GM13977 (cell line): ENCODE measurements at regions of chr11 and their contacts with region 1.

Region 1: DNA sequence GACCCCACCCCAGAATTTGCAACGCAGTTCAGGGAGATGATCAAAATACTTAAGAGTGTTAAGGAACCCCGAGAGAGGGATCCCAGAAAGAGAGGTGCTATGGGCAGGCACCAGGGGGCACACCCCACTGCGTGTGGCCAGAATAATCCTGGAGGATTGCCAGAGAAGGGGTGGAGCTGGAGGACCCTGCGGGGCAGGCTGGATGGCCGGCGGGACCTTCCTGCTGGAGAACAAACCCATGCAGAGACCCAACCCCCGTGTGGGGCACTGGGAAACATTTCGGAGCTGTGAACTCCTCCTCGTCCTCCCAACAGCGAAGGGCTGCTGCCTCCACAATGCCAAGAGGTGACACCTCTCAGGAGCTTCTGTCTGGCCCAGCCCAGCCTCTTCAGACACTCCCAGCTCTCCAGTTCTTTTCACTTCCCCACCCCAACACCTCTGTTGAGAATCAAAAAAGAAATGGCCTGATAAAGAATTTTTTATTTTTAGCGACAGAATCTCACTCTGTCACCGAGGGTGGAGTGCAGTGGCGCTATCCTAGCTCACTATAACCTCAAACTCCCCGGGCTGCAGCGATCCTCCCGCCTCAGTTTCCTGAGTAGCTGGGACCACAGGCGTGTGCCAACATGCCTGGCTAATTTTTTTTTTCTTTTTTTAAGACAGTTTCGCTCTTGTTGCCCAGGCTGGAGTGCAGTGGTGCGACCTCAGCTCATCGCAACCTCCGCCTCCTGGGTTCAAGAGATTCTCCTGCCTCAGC is 25.6 kb downstream of the RHOD start:
- DNase-seq: no peak
- CTCF ChIP-seq: peak; percentile 34

Region 2: DNA sequence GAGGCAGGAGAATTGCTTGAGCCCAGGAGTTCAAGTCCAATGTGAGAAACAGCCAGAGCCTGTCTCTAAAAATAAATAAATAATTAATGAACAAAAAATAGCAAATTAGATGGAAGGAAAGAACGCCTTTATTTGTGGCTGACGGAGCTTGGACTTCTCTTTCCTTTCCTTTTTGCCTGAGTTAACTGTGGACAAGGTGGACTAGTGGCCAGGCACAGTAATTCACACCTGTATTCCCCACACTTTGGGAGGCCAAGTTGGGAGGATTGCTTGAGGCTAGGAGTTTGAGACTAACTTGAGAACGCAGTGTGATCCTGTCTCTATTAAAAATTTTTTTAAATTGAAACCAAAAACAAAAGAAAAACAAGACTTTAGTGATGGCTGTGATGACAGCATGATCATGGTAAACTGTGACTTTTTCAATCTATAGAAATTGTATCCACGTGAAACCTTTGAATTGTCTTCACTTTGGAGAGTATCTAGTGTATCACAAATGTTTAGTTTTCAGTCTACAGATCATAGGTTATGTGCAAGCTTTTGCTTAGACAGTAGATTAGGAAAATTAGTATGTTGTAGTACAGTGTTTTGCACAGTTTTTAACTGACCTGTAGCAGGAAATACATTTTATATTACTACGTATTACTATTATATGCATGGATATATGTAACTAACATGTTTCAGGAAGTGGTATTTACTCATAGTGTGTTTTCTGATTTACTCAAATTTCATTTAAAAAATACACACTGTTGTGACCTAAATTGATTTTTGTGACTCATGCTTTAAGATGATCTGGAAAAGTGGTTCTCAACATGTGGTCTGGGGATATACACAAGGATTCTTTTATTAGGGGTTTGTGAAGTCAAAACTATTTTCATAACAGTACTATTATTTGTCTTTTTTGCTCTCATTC is 78.9 kb after region 1 on chr11:
- in situ Hi-C with region 1: loop called (anchors 10 kb)
- DNase-seq: no peak
- CTCF ChIP-seq: no peak